ENCODE measurements at regions of chr9 and their contacts with region 1.

Region 1: GRCh38 chr9:113857875-113858274 is 18.2 kb upstream of the ZNF618 start:
- DNase-seq: no peak
- ATAC-seq: no peak
- H3K4me3 ChIP-seq: no peak overlapping the region
- H3K27ac ChIP-seq: no peak overlapping the region
- H3K4me1 ChIP-seq: peaks cover 6% of the 10 kb centered on the region; the same call in 1 of the 2 replicates
- H3K27me3 ChIP-seq: peaks cover 0 to 12% of the 10 kb centered on the region in 2 experiments; a peak in 1 of 5 replicates
- CTCF ChIP-seq: no peak
- EP300 ChIP-seq: no peak
- POLR2A ChIP-seq: no peak
- RAD21 ChIP-seq: no peak

Region 2: DNA sequence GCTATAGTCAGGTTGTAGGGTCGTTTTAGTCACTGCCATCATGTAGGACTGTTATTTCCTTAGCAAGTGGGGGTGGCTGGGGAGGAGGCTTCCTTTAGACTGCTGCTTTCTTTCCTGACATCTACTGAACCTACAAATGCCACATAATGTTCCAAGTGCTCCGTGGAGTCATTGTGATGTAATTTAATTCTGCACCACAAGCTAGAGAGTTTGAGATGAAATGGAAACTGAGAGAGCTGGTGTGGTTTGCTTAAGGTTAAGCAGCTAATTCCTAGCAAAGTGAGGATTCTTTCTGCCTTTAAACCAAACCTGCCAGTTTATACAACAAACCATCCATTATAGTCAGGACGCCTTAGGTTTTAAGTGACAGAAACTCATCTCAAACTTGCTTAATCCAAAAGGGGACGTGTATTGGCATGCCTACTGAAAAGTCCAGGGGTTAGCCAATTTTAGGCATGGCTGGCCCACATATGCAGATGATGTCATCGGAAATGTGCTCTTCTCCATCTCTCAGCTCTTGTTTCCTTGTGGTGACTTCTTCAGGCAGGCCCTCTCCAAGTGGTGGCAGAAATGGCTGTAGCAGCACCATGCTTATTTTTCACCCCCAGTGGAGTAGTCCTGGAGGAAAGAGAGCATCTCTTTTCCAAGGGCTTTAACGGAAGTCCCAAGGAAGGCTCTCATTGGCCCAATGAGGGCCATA is 48.7 kb after region 1 on chr9:
- CTCF ChIA-PET with region 1: no interaction called
- POLR2A ChIA-PET with region 1: no interaction called
- in situ Hi-C with region 1: no loop called
- intact Hi-C with region 1: loop called (anchors 1 kb)
- DNase-seq: no peak
- ATAC-seq: no peak
- H3K4me3 ChIP-seq: no peak overlapping the region
- H3K27ac ChIP-seq: no peak overlapping the region
- H3K4me1 ChIP-seq: no peaks in the 10 kb centered on the region
- H3K27me3 ChIP-seq: peaks cover 0 to 15% of the 10 kb centered on the region in 2 experiments; a peak in 2 of 5 replicates
- CTCF ChIP-seq: no peak
- EP300 ChIP-seq: no peak
- POLR2A ChIP-seq: no peak
- RAD21 ChIP-seq: no peak

Region 3: GRCh38 chr9:113919382-113919781 is 61.5 kb after region 1 on chr9:
- CTCF ChIA-PET with region 1: no interaction called
- POLR2A ChIA-PET with region 1: no interaction called
- in situ Hi-C with region 1: no loop called
- intact Hi-C with region 1: no loop called
- DNase-seq: no peak
- ATAC-seq: no peak
- H3K4me3 ChIP-seq: no peak overlapping the region
- H3K27ac ChIP-seq: no peak overlapping the region
- H3K4me1 ChIP-seq: no peaks in the 10 kb centered on the region
- H3K27me3 ChIP-seq: peaks cover 0 to 1% of the 10 kb centered on the region in 2 experiments; a peak in 1 of 5 replicates
- CTCF ChIP-seq: no peak
- EP300 ChIP-seq: no peak
- POLR2A ChIP-seq: no peak
- RAD21 ChIP-seq: no peak

Region 4: DNA sequence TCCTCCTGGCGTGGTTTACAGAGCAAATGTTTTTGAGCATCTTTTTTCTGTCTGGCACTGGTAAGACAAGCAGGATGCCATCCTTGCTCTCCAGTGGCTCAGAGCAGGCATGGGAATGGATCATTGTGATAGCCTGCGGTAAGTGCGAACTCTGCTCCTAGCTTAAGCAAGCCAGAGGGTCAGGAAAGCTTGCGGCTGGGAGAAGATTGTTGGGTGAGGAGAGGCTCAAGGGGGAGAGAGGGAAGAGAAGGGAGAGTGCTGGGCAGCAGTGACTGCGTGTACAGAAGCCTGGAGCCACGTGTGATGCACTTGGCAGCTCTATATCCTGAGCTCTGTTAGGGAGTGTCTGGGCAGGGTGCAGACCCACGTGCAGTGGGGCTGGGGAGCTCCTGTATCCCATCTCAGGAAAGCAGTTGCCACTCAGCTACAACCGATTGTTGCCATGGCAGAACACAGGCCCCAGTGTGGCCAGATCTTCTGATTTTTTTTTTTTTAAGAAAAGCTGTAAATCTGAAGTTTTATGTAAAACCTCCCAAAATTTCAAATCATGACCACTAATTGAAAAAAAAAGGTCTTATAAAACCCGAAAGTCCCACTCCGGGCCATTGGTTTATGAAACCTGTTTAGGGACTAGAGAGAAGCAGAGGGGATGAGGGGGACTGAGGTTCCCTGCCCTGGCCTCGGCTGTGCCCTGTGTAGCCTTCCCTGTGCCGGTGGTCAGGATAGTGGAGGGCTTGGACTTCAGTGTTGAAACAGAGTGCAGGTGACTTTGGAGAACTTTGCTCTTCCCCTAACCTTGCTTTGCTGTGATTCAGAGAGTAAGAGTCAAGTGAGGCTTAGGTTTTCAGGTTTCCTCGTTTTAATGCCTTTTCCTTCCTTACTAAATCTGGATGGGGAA is 85.5 kb after region 1 on chr9:
- CTCF ChIA-PET with region 1: no interaction called
- POLR2A ChIA-PET with region 1: no interaction called
- in situ Hi-C with region 1: no loop called
- intact Hi-C with region 1: no loop called
- DNase-seq: no peak
- ATAC-seq: no peak
- H3K4me3 ChIP-seq: no peak overlapping the region
- H3K27ac ChIP-seq: no peak overlapping the region
- H3K4me1 ChIP-seq: no peaks in the 10 kb centered on the region
- H3K27me3 ChIP-seq: peaks cover 0 to 15% of the 10 kb centered on the region in 2 experiments; a peak in 4 of 5 replicates
- CTCF ChIP-seq: no peak
- EP300 ChIP-seq: no peak
- POLR2A ChIP-seq: no peak
- RAD21 ChIP-seq: no peak

Measured in HepG2 (cell line).